Psoas muscle (tissue), 8 donors: ENCODE measurements at regions of chr2 and their contacts with region 1.

Region 1: DNA sequence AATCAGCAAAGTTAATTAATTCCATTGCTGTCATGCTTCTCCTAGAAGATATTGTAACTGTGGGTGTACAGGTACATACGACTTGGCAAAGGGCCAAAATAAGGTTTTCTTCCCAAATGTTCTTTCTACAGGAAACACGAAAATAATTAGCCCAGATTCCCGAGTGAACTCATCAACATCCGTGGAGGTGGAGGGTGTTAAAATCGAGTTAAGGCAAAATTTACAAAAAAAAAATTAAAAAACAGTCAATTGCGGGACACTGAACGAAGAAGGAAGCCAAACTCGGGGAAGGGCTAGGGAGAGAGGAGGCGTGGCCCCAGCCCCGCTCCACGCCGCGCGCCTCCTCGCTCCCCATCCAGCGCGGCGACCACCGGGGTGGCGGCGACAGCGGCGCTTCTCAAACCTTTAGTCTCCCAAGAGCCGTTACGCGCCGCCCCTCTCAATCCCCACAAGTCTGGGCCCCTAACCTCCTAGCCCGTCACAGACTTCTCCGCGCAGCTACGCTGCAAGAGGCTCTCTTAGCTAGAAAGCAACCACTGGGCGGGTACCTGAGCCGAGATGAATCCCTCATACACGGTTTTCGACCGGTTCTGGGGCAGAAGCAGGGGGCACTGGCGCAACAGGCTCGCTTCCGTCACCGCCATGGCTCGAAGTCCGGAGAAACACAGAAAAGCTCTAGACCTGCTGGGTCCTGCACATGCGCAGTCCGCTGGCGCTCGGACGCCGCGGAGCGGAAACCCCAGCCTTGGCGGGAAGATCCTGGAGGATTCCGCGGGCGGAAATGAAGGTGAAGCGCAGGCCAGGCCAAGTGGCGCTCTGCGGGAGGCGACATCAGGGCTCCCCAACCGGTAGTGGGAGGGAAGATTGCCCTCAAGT is at the start of gene FANCL:
- DNase-seq: peak; percentile 90 to 94
- ATAC-seq: peak; percentile 88 to 99 (median 95)
- H3K4me3 ChIP-seq: peak within 1 kb of the TSS; percentile 84
- H3K27ac ChIP-seq: peak within 1 kb of the TSS; percentile 61
- H3K4me1 ChIP-seq: peaks cover 9% of the 10 kb centered on the region
- H3K27me3 ChIP-seq: no peaks in the 10 kb centered on the region
- CTCF ChIP-seq: no peak
- total RNA-seq, gene FANCL: 4.2 to 6.4 (median 5.3) TPM

Region 2: DNA sequence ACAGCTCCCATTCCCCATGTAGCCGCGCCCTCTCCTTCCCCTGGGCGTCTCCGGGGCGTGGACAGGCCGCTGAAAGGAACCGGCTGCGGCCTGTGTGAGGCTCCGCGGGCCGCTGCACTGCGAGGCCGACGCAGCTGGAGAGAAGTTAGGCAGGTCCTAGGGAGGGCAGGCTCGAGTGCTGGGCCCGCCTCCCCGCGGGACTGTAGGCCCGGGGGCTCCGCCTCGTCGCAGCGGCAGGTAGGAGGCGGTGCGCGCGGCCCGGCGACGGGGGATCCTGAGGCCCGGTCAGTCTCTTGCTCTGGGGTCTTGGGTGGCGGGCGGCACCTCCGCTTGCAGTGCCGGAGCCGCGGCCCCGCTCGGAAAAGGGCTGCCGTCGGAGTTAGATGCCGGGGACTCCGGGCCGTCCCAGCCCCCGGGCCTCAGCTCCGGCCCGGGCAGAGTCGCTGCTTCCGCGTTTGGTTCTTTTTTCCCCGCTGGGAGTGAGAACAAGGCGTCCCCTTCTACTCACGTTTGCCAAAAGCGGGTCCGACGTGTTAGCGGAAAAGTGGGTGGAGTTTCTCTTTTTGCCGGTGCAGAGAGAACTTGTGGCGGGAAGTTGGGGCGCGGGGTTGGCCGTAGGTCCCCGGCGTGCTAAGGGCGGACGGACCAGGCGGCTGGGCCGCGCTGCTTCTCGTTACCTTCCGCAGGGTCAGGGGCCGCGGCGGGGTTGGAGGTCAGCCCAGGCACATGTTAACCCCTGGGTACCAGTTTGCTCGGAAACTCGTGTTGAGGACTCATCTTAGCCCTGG is 194.1 kb before region 1 on chr2 and contains the start of gene VRK2:
- intact Hi-C with region 1: loop called in 1 of 2 experiments (anchors 5 kb)
- DNase-seq: peak; percentile 86 to 92
- ATAC-seq: peak; percentile 92 to 97 (median 94)
- H3K4me3 ChIP-seq: peak within 1 kb of the TSS; percentile 90
- H3K27ac ChIP-seq: peak within 1 kb of the TSS; percentile 93
- H3K4me1 ChIP-seq: peaks cover 13% of the 10 kb centered on the region
- H3K27me3 ChIP-seq: no peaks in the 10 kb centered on the region
- CTCF ChIP-seq: no peak
- total RNA-seq, gene VRK2: 17.1 to 30.2 (median 24.6) TPM

Region 3: DNA sequence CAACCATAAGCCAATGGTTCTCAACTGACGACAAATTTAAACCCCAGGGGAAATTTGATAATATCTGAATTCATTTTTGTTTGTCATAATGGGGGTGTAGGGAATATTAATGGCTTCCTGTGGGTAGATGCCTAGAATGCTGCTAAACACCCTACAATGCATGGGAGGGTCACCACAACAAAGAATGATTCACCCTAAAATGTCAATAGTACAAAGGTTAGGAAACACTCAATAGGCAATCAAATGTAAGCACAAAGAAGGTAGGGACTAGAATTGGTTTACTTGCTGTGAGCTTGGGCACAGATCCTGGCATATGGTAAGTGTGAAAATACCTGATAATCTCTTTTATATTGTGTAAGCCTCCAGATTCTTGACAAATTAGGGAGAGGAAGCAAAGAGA is 20.3 kb after region 1 on chr2:
- intact Hi-C with region 1: no loop called
- DNase-seq: no peak
- ATAC-seq: no peak
- H3K4me3 ChIP-seq: no peak overlapping the region
- H3K27ac ChIP-seq: no peak overlapping the region
- H3K4me1 ChIP-seq: no peaks in the 10 kb centered on the region
- H3K27me3 ChIP-seq: no peaks in the 10 kb centered on the region
- CTCF ChIP-seq: no peak

Region 4: GRCh38 chr2:58521803-58522554 is 281.1 kb after region 1 on chr2:
- intact Hi-C with region 1: no loop called
- DNase-seq: no peak
- ATAC-seq: no peak
- H3K4me3 ChIP-seq: no peak overlapping the region
- H3K27ac ChIP-seq: no peak overlapping the region
- H3K4me1 ChIP-seq: no peaks in the 10 kb centered on the region
- H3K27me3 ChIP-seq: no peaks in the 10 kb centered on the region
- CTCF ChIP-seq: no peak